ENCODE measurements at regions of chr12 and their contacts with region 1.

Region 1: DNA sequence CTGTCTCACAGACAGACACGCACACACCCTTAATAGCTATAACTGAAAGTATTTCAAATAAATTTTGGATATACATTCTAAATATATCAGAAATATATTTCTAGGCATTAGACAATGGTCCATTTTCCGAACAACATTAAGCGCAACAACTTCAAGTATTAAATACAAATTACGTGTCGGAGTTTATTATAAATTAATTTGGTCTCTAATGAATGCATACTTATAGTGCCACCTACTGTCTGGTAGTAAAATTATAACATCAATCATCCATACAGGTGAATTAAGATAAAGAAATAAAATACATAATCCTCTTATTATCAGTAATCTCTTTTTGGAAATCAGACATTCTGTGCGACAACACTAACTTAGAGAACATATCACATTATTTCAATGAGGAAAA is 27.2 kb upstream of the CMAS start:
- DNase-seq: no peak
- H3K4me3 ChIP-seq: no peak overlapping the region
- H3K27ac ChIP-seq: no peak overlapping the region
- H3K4me1 ChIP-seq: no peaks in the 10 kb centered on the region
- H3K27me3 ChIP-seq: no peaks in the 10 kb centered on the region
- CTCF ChIP-seq: peak in 4 of 6 experiments; percentile 19 to 51 (median 36)
- POLR2A ChIP-seq: no peak

Region 2: GRCh38 chr12:21697904-21698630 is 320.8 kb before region 1 on chr12:
- intact Hi-C with region 1: loop called (anchors 5 kb)
- DNase-seq: no peak
- H3K4me3 ChIP-seq: peak overlapping the region in 1 of 4 donors; percentile 28
- H3K27ac ChIP-seq: no peak overlapping the region
- H3K4me1 ChIP-seq: peaks cover 0 to 3% (median 0%) of the 10 kb centered on the region in 3 donors
- H3K27me3 ChIP-seq: no peaks in the 10 kb centered on the region
- CTCF ChIP-seq: peak; percentile 31 to 65 (median 50)
- POLR2A ChIP-seq: no peak

Region 3: DNA sequence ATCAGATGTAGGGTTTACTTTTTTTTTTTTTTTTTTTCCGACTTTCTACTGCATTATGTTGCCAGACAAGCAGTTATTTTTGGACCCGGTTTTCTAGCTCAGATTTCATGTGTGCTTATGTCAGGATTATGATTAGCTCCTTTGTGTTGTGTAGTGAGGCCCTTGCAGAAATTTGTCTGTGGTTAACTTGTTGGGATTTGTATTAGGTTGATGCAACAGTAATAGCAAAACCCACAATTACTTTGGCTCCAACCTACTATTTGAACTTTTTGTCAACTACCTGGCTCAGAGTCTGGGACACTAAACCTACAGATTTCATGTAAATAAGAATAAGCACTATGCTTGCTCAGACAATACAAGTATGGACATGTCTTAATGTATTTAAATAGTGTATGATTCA is 200.2 kb before region 1 on chr12:
- intact Hi-C with region 1: no loop called
- DNase-seq: no peak
- H3K4me3 ChIP-seq: no peak overlapping the region
- H3K27ac ChIP-seq: no peak overlapping the region
- H3K4me1 ChIP-seq: peaks cover 0 to 18% (median 4%) of the 10 kb centered on the region in 3 donors
- H3K27me3 ChIP-seq: no peaks in the 10 kb centered on the region
- CTCF ChIP-seq: no peak
- POLR2A ChIP-seq: no peak

Region 4: DNA sequence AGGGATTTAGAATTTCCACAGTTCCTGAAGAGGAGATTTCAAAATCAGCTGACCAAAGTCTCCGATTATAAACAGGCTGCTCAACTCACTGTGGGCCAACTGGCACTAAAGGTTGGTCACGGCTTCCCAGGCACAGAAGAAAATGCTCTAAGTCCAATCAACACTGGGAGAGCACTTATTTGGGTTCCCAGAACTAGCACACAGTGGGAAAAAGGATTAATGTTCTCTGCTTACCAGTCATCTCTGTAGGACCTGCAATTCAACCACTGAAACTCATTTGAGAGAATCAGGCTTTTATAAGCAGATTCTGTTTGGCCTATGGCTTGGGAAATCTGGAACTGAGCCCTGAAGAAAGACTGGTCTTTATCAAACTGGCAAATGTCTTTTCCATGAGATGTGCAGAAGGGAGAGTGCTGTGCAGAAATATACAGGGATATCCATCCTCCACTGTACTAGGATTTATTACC is 127.1 kb before region 1 on chr12:
- intact Hi-C with region 1: no loop called
- DNase-seq: no peak
- H3K4me3 ChIP-seq: no peak overlapping the region
- H3K27ac ChIP-seq: peak overlapping the region in 3 of 4 donors; percentile 60 to 75 (median 69)
- H3K4me1 ChIP-seq: peaks cover 0 to 3% (median 0%) of the 10 kb centered on the region in 3 donors
- H3K27me3 ChIP-seq: no peaks in the 10 kb centered on the region
- CTCF ChIP-seq: no peak
- POLR2A ChIP-seq: no peak

Region 5: DNA sequence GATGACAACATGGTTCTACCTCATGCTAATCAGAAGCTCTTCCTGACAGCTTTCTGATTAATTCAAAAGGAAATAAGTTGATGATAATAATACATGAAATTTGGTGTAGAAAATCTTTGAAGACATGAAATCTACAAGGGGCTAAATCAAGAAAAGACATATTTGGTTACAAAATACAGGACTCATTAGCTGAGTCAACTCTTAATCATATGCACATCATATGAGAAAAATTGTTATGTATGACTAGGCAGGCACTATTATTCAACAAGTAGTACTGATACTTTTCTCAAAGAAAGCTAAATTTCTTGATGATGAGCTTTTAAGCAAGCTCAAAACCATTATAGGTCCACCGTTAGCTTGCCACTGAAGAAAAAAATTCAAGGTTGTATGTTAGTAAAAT is 84.7 kb before region 1 on chr12:
- intact Hi-C with region 1: no loop called
- DNase-seq: no peak
- H3K4me3 ChIP-seq: no peak overlapping the region
- H3K27ac ChIP-seq: no peak overlapping the region
- H3K4me1 ChIP-seq: no peaks in the 10 kb centered on the region
- H3K27me3 ChIP-seq: peaks cover 0 to 16% (median 0%) of the 10 kb centered on the region in 4 donors
- CTCF ChIP-seq: no peak
- POLR2A ChIP-seq: no peak

Region 6: DNA sequence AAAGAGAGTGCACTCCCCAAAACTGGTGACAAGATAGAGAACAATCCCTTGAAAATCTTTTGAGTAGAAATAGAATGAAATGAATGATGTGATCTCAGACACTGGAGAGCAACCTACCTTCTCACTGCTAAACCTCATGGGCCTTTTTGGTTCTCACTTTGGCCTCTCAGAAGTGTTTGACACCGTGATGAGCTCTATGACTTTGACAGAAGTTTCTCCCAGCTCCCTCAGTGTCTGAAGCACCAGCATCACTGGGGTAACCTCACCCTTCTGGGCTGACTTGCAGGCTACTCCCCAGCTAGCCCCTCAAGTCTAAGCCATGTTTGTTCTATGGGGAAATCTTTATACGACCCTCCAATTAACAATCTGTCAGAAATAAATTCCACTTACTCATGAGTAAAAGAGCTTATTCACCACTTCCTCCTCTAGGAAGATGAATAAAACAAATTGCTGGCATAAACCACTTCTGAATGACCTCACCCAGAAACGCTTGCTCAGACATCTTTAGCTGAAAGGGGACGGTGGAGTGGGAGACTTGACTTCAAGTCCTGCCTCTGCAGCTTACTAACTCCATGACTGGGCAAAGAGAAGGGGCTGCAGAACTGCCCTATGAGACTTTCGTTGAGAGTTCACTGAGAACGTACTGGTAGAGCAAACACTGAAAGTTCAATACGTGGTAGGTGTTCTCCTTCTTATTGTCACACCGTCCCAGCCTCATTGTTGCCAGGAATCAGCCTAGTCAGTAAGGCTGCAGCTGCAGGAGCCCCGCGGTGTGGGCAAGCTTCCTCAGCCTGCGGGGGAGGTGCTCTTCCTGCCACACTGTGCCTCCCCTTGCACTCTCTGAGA is 269.1 kb after region 1 on chr12:
- intact Hi-C with region 1: no loop called
- DNase-seq: no peak
- H3K4me3 ChIP-seq: no peak overlapping the region
- H3K27ac ChIP-seq: no peak overlapping the region
- H3K4me1 ChIP-seq: peaks cover 0 to 31% (median 3%) of the 10 kb centered on the region in 3 donors
- H3K27me3 ChIP-seq: no peaks in the 10 kb centered on the region
- CTCF ChIP-seq: no peak
- POLR2A ChIP-seq: no peak